ENCODE measurements at regions of chr4 and their contacts with region 1.

Region 1: GRCh38 chr4:1266881-1267763 is 18.2 kb upstream of the CTBP1 start:
- DNase-seq: peak in 2 of 5 donors; percentile 25 to 36
- H3K4me3 ChIP-seq: peak overlapping the region in 1 of 2 donors; percentile 62
- H3K4me3 Mint-ChIP-seq: peak overlapping the region; percentile 75 to 90 (median 88)
- H3K27ac ChIP-seq: peak overlapping the region; percentile 63
- H3K27ac Mint-ChIP-seq: peak overlapping the region; percentile 94 to 100 (median 95)
- H3K4me1 ChIP-seq: peaks cover 12% of the 10 kb centered on the region
- H3K4me1 Mint-ChIP-seq: peaks cover 9 to 19% (median 12%) of the 10 kb centered on the region in 4 donors
- H3K27me3 ChIP-seq: no peaks in the 10 kb centered on the region
- H3K27me3 Mint-ChIP-seq: no peaks in the 10 kb centered on the region

Region 2: DNA sequence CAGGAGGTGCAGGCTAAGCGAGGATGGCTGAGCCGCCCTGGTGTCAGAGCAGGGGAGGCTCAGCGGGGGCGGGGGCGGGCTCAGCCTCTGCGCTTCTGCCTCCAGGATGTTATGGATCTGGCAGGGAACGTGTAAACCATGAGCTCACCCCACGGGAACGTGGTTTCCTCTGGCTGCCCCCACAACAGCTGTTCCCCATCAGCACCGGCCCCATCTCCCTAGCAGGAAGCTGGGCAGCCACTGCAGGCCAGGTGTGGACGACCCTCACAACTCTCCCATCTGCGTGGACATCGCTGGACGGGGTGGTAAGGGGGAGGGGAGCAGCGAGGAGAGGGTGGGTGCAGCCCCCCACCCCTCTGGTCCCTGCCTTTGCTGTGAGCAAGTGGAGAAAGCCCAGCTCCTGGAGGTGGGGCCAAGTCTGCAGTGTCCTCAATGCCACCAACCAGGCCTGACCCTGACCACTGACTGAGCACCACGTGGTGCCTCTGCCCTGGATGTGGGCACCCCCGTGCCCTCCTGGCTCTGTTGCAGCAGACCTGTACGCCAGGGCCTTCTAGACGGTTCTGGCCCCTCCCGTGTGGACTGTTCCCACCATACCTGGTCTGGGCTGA is 66.6 kb before region 1 on chr4:
- CTCF ChIA-PET with region 1: interaction called, 14 read pairs
- POLR2A ChIA-PET with region 1: interaction called, 4 read pairs
- intact Hi-C with region 1: no loop called
- DNase-seq: no peak
- H3K4me3 ChIP-seq: peak overlapping the region; percentile 49 to 58
- H3K4me3 Mint-ChIP-seq: peak overlapping the region; percentile 68 to 89 (median 82)
- H3K27ac ChIP-seq: peak overlapping the region; percentile 50
- H3K27ac Mint-ChIP-seq: peak overlapping the region; percentile 64 to 100 (median 98)
- H3K4me1 ChIP-seq: peaks cover 56% of the 10 kb centered on the region
- H3K4me1 Mint-ChIP-seq: peaks cover 23 to 61% (median 40%) of the 10 kb centered on the region in 4 donors
- H3K27me3 ChIP-seq: no peaks in the 10 kb centered on the region
- H3K27me3 Mint-ChIP-seq: no peaks in the 10 kb centered on the region

Region 3: GRCh38 chr4:1218634-1219565 is 48.2 kb before region 1 on chr4:
- CTCF ChIA-PET with region 1: interaction called, 15 read pairs
- POLR2A ChIA-PET with region 1: interaction called, 5 read pairs
- intact Hi-C with region 1: no loop called
- DNase-seq: no peak
- H3K4me3 ChIP-seq: no peak overlapping the region
- H3K4me3 Mint-ChIP-seq: peak overlapping the region in 6 of 8 donors; percentile 21 to 56 (median 42)
- H3K27ac ChIP-seq: no peak overlapping the region
- H3K27ac Mint-ChIP-seq: peak overlapping the region; percentile 7 to 86 (median 58)
- H3K4me1 ChIP-seq: peaks cover 40% of the 10 kb centered on the region
- H3K4me1 Mint-ChIP-seq: peaks cover 25 to 58% (median 37%) of the 10 kb centered on the region in 4 donors
- H3K27me3 ChIP-seq: no peaks in the 10 kb centered on the region
- H3K27me3 Mint-ChIP-seq: no peaks in the 10 kb centered on the region

Region 4: DNA sequence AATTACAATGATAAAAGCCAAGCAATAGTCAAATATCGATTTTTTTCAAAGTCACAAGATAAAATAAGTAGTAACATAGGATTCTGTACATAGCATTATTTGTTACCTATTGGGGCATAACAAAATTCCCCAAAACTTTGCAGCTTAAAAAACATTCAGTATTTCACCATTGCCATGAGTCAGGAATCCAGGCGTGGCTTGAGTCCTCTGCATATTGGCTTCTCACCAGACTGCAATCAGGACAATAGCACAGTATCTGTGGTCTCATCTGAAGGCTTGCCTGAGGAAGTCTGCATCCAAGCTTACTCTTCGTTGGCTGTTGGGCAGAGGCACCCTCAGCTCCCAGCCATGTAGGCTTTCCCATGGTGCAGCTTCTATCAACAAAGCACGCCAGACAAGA is 12.0 kb before region 1 on chr4:
- CTCF ChIA-PET with region 1: interaction called, 42 read pairs
- POLR2A ChIA-PET with region 1: interaction called, 61 read pairs
- intact Hi-C with region 1: no loop called
- DNase-seq: no peak
- H3K4me3 ChIP-seq: no peak overlapping the region
- H3K4me3 Mint-ChIP-seq: no peak overlapping the region
- H3K27ac ChIP-seq: peak overlapping the region; percentile 7
- H3K27ac Mint-ChIP-seq: peak overlapping the region; percentile 74 to 99 (median 93)
- H3K4me1 ChIP-seq: peaks cover 52% of the 10 kb centered on the region
- H3K4me1 Mint-ChIP-seq: peaks cover 47 to 86% (median 62%) of the 10 kb centered on the region in 4 donors
- H3K27me3 ChIP-seq: no peaks in the 10 kb centered on the region
- H3K27me3 Mint-ChIP-seq: no peaks in the 10 kb centered on the region

Region 5: GRCh38 chr4:1289207-1290164 is 22.4 kb after region 1 on chr4 and contains the start of gene MAEA:
- CTCF ChIA-PET with region 1: interaction called, 18 read pairs
- POLR2A ChIA-PET with region 1: interaction called, 10 read pairs
- intact Hi-C with region 1: no loop called
- DNase-seq: peak; percentile 97
- H3K4me3 ChIP-seq: peak within 1 kb of the TSS; percentile 78 to 86
- H3K4me3 Mint-ChIP-seq: peak within 1 kb of the TSS; percentile 90 to 94 (median 92)
- H3K27ac ChIP-seq: peak within 1 kb of the TSS; percentile 76
- H3K27ac Mint-ChIP-seq: peak within 1 kb of the TSS; percentile 82 to 97 (median 95)
- H3K4me1 ChIP-seq: peaks cover 49% of the 10 kb centered on the region
- H3K4me1 Mint-ChIP-seq: peaks cover 25 to 48% (median 39%) of the 10 kb centered on the region in 4 donors
- H3K27me3 ChIP-seq: no peaks in the 10 kb centered on the region
- H3K27me3 Mint-ChIP-seq: no peaks in the 10 kb centered on the region
- total RNA-seq, gene MAEA: 101 to 106 TPM

Region 6: GRCh38 chr4:1395941-1396806 is 129.1 kb after region 1 on chr4:
- CTCF ChIA-PET with region 1: no interaction called
- POLR2A ChIA-PET with region 1: no interaction called
- intact Hi-C with region 1: no loop called
- DNase-seq: no peak
- H3K4me3 ChIP-seq: no peak overlapping the region
- H3K4me3 Mint-ChIP-seq: no peak overlapping the region
- H3K27ac ChIP-seq: no peak overlapping the region
- H3K27ac Mint-ChIP-seq: no peak overlapping the region
- H3K4me1 ChIP-seq: no peaks in the 10 kb centered on the region
- H3K4me1 Mint-ChIP-seq: no peaks in the 10 kb centered on the region
- H3K27me3 ChIP-seq: no peaks in the 10 kb centered on the region
- H3K27me3 Mint-ChIP-seq: peaks cover 0 to 9% of the 10 kb centered on the region in 2 donors

Measured in CD4-positive, alpha-beta memory T cell (primary cell).